IMR-90 (cell line): ENCODE measurements at regions of chr6 and their contacts with region 1.

Region 1: GRCh38 chr6:107645800-107646575 is 156.1 kb downstream of the SOBP start:
- DNase-seq: no peak
- ATAC-seq: peak; percentile 32
- H3K4me3 ChIP-seq: no peak overlapping the region
- H3K27ac ChIP-seq: no peak overlapping the region
- H3K4me1 ChIP-seq: no peaks in the 10 kb centered on the region; the same call in 1 of the 2 replicates
- H3K27me3 ChIP-seq: no peaks in the 10 kb centered on the region
- CTCF ChIP-seq: no peak
- POLR2A ChIP-seq: no peak
- RAD21 ChIP-seq: no peak

Region 2: GRCh38 chr6:107657755-107658461 is 11.9 kb after region 1 on chr6:
- CTCF ChIA-PET with region 1: interaction called, 5 read pairs
- POLR2A ChIA-PET with region 1: no interaction called
- dilution Hi-C with region 1: no loop called
- in situ Hi-C with region 1: no loop called
- intact Hi-C with region 1: loop called (anchors 1 kb)
- DNase-seq: peak; percentile 86
- ATAC-seq: peak; percentile 90
- H3K4me3 ChIP-seq: peak overlapping the region; percentile 4; the same call in 1 of the 2 replicates
- H3K27ac ChIP-seq: peak overlapping the region; percentile 79
- H3K4me1 ChIP-seq: peaks cover 27% of the 10 kb centered on the region
- H3K27me3 ChIP-seq: no peaks in the 10 kb centered on the region
- CTCF ChIP-seq: peak; percentile 48
- POLR2A ChIP-seq: no peak
- RAD21 ChIP-seq: peak; percentile 43

Region 3: DNA sequence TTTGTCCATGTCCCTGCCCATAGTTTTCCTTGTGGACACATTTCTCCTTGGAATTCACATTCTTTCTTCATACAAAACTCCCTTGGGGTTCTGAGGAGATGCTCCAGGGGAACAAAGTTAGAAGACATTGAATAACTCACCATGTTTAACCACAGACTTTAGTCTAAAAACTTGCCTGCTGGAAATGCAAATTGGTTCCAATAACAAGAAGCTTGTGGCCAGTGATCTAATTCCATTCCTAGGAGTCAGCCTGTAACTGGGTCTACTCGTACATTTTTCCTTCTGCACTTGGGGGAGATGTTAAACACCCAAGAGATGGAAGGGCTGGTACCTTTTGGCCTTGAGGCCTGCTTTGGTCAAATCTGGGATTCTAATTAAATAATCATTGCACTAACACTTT is 118.0 kb after region 1 on chr6:
- CTCF ChIA-PET with region 1: no interaction called
- POLR2A ChIA-PET with region 1: no interaction called
- dilution Hi-C with region 1: no loop called
- in situ Hi-C with region 1: no loop called
- intact Hi-C with region 1: no loop called
- DNase-seq: peak; percentile 53
- ATAC-seq: peak; percentile 46
- H3K4me3 ChIP-seq: no peak overlapping the region
- H3K27ac ChIP-seq: no peak overlapping the region
- H3K4me1 ChIP-seq: no peaks in the 10 kb centered on the region
- H3K27me3 ChIP-seq: peaks cover 7% of the 10 kb centered on the region
- CTCF ChIP-seq: no peak
- POLR2A ChIP-seq: no peak
- RAD21 ChIP-seq: no peak